Activated B cell treated with CpG ODN at 0.5 μM for 24 hours (primary cell): ENCODE measurements at regions of chr12 and their contacts with region 1.

Region 1: DNA sequence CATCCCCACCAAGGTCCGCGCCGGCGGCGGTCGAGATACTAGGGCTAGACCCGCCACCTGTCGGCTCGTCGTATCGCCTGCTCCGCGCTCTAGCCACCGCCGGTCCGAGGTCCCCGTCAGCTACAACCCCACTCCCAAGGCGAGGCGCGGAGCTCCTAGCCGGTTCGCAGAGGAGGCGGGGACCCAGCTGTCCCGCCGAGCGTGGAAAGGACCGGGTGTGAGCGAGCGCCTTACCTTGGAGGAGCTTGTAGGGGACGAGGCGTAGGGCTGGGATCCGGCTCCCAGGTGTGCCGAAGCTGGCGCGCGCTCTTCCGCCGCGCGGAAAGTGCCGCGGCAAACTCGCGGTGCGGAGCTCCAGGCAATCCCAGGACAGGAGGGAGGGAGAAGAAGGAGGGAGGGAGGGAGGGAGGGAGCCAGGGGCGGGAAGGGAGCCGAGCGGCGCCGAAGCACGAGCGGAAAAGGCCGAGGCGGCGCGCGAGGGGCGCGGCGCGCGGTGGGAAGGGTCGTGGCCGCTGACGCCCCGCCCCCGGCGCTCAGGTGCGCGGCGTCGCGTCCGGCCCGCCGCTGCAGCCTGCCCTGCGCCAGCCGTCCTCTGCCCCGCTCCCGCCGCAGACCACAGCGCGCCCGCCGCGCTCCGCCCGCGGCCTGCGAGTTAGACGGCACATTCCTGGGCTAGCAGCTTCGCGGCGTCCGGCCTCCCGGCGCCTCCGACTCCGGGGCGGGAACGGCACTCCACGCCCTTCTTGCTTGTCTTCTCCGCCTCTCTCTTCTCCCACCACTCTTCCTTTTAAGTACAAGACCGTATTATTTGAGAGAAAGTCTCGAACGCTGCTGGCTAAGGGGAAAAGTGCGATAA is at the start of gene PAWR:
- DNase-seq: peak; percentile 48
- ATAC-seq: peak; percentile 73
- H3K4me3 Mint-ChIP-seq: peak within 1 kb of the TSS; percentile 91
- H3K27ac Mint-ChIP-seq: peak within 1 kb of the TSS; percentile 79
- H3K4me1 Mint-ChIP-seq: peaks cover 37% of the 10 kb centered on the region
- H3K27me3 Mint-ChIP-seq: no peaks in the 10 kb centered on the region
- CTCF ChIP-seq: no peak
- total RNA-seq, gene PAWR: 50.0 and 53.1 TPM in 2 replicates

Region 2: GRCh38 chr12:79098530-79098929 is 592.3 kb before region 1 on chr12:
- CTCF ChIA-PET with region 1: no interaction called
- POLR2A ChIA-PET with region 1: no interaction called
- intact Hi-C with region 1: no loop called
- DNase-seq: no peak
- ATAC-seq: no peak
- H3K4me3 Mint-ChIP-seq: no peak overlapping the region
- H3K27ac Mint-ChIP-seq: no peak overlapping the region
- H3K4me1 Mint-ChIP-seq: no peaks in the 10 kb centered on the region
- H3K27me3 Mint-ChIP-seq: no peaks in the 10 kb centered on the region
- CTCF ChIP-seq: no peak

Region 3: GRCh38 chr12:79547735-79548609 is 142.9 kb before region 1 on chr12:
- CTCF ChIA-PET with region 1: interaction called, 3 read pairs
- POLR2A ChIA-PET with region 1: interaction called, 3 read pairs
- intact Hi-C with region 1: loop called (anchors 1 kb)
- DNase-seq: no peak
- ATAC-seq: no peak
- H3K4me3 Mint-ChIP-seq: no peak overlapping the region
- H3K27ac Mint-ChIP-seq: no peak overlapping the region
- H3K4me1 Mint-ChIP-seq: no peaks in the 10 kb centered on the region
- H3K27me3 Mint-ChIP-seq: no peaks in the 10 kb centered on the region
- CTCF ChIP-seq: peak; percentile 29

Region 4: GRCh38 chr12:79555028-79555930 is 135.6 kb before region 1 on chr12:
- CTCF ChIA-PET with region 1: interaction called, 4 read pairs
- POLR2A ChIA-PET with region 1: interaction called, 6 read pairs
- intact Hi-C with region 1: loop called (anchors 1 kb)
- DNase-seq: no peak
- ATAC-seq: no peak
- H3K4me3 Mint-ChIP-seq: no peak overlapping the region
- H3K27ac Mint-ChIP-seq: no peak overlapping the region
- H3K4me1 Mint-ChIP-seq: peaks cover 8% of the 10 kb centered on the region
- H3K27me3 Mint-ChIP-seq: no peaks in the 10 kb centered on the region
- CTCF ChIP-seq: no peak

Region 5: GRCh38 chr12:79615596-79616560 is 75.0 kb before region 1 on chr12:
- CTCF ChIA-PET with region 1: no interaction called
- POLR2A ChIA-PET with region 1: interaction called, 4 read pairs
- intact Hi-C with region 1: loop called (anchors 5 kb)
- DNase-seq: no peak
- ATAC-seq: no peak
- H3K4me3 Mint-ChIP-seq: no peak overlapping the region
- H3K27ac Mint-ChIP-seq: no peak overlapping the region
- H3K4me1 Mint-ChIP-seq: peaks cover 27% of the 10 kb centered on the region
- H3K27me3 Mint-ChIP-seq: no peaks in the 10 kb centered on the region
- CTCF ChIP-seq: no peak

Region 6: DNA sequence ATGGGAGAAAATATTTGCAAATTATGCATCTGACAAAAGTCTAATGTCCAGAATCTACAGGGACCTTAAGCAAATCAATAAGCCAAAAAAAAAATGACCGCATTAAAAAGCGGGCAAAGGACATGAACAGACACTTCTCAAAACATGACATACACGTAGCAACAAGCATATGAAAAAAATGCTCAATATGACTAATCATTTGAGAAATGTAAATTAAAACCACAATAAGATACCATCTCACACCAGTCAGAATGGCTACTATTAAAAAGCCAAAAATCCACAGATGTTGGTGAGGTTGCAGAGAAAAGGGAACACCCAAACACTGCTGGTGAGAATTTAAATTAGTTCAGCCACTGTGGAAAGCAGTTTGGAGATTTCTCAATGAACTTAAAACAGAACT is 16.2 kb before region 1 on chr12:
- CTCF ChIA-PET with region 1: no interaction called
- POLR2A ChIA-PET with region 1: interaction called, 6 read pairs
- intact Hi-C with region 1: loop called (anchors 1 kb)
- DNase-seq: no peak
- ATAC-seq: peak; percentile 41
- H3K4me3 Mint-ChIP-seq: no peak overlapping the region
- H3K27ac Mint-ChIP-seq: peak overlapping the region; percentile 54
- H3K4me1 Mint-ChIP-seq: peaks cover 53% of the 10 kb centered on the region
- H3K27me3 Mint-ChIP-seq: no peaks in the 10 kb centered on the region
- CTCF ChIP-seq: no peak

Region 7: GRCh38 chr12:79935021-79935623 is 244.3 kb after region 1 on chr12 and contains the start of gene PPP1R12A:
- CTCF ChIA-PET with region 1: no interaction called
- POLR2A ChIA-PET with region 1: interaction called, 8 read pairs
- intact Hi-C with region 1: loop called (anchors 1 kb)
- DNase-seq: peak; percentile 94
- ATAC-seq: peak; percentile 83
- H3K4me3 Mint-ChIP-seq: peak within 1 kb of the TSS; percentile 99
- H3K27ac Mint-ChIP-seq: peak within 1 kb of the TSS; percentile 98
- H3K4me1 Mint-ChIP-seq: peaks cover 48% of the 10 kb centered on the region
- H3K27me3 Mint-ChIP-seq: no peaks in the 10 kb centered on the region
- CTCF ChIP-seq: no peak
- total RNA-seq, gene PPP1R12A: 72.9 and 90.4 TPM in 2 replicates